ENCODE measurements at regions of chr3 and their contacts with region 1.

Region 1: DNA sequence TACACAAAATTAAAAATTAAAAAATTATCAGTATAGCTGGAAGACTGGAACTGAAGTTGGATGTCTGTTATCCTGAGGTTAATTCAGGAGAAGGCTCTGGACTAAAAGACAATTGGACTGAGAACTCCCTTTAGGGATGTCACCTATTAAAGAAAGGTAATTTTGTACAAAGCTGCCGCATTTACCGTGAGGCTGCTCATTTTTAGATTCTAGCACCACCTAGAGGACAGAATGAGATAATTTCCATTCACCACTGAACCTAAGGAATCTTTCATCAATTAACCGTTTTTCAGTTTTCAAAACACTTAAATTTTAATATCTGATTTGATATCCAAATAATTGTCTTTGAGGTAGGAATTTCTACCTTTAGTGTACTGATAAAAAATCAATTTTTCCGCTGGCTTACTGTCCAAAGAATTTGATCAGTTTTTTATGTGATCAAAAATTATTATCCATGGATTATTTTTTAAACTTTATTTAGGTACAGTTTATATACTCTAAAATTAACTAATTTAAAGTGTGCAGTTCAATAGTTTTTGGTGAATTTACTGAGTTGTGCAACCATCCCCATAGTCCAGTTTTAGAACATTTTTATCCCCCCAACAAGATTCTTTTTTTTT is 106.7 kb upstream of the TNIK start:
- DNase-seq: no peak
- H3K4me3 ChIP-seq: no peak overlapping the region
- CTCF ChIP-seq: peak in 1 of 3 donors; percentile 67
- POLR2A ChIP-seq: no peak

Region 2: DNA sequence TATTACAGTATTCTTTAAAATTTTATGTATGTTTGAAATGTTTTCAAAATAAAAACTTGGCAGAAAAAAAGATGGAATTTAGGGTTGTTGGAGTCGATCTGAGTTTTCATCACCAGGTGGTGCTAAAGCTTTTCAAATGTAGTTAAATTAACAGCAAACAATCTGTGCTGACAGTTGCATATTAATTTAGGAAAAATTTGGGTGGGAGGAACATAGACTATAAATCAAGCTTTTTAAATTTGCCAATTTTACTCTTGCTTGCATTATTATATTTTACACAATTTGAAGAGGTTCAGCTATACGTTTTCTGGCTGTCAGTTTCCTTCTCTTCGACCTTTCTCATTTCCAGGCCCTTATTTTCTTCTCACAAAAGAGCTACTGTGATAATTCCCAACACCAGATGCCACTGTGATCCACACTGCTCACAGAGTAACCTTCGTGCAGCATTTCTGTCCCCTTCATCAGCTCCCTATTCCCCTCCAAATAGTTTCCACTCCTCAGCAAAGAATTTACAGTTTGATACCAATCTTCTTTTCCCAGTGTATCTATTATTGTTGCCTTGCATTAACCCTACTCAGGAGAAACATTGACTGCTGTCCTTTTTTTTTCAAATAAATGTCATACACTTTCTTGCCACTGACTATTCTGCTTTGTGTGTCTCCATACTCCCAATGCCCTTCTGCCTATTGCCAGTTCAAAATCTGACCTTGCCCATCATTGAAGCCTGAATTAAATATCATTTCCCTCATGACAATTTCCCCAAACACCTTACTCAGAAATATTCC is 605.1 kb before region 1 on chr3:
- intact Hi-C with region 1: loop called (anchors 10 kb)
- DNase-seq: no peak
- H3K4me3 ChIP-seq: no peak overlapping the region
- CTCF ChIP-seq: no peak
- POLR2A ChIP-seq: no peak